Transverse colon (tissue), 4 donors: ENCODE measurements at regions of chr3 and their contacts with region 1.

Region 1: GRCh38 chr3:190197346-190197763 is 76.7 kb upstream of the P3H2 start:
- DNase-seq: no peak
- H3K4me3 ChIP-seq: no peak overlapping the region
- H3K27ac ChIP-seq: no peak overlapping the region
- H3K4me1 ChIP-seq: peaks cover 0 to 10% (median 0%) of the 10 kb centered on the region in 4 donors
- H3K27me3 ChIP-seq: no peaks in the 10 kb centered on the region
- CTCF ChIP-seq: no peak
- EP300 ChIP-seq: no peak
- POLR2A ChIP-seq: no peak

Region 2: DNA sequence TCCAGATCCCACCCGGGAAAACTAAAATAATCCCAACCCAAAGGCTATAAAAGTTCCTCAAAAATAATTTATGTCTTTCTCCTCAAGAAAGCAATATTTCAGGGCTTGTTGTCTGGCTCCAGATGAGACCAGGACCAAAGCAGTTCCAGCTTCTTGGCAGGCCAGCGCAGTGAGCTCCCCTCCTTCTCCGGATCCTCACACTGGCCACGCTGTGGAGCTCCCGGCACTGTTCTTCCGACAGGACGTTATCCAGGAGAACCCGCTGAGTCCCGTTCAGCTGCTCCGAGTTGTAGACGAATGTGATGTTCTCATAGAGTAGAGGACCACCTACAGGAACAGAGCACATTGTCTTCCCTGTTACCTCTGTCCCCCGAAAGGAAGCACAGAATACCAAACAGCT is 223.0 kb before region 1 on chr3:
- in situ Hi-C with region 1: loop called (anchors 5 to 10 kb)
- intact Hi-C with region 1: no loop called
- DNase-seq: no peak
- H3K4me3 ChIP-seq: no peak overlapping the region
- H3K27ac ChIP-seq: no peak overlapping the region
- H3K4me1 ChIP-seq: no peaks in the 10 kb centered on the region
- H3K27me3 ChIP-seq: no peaks in the 10 kb centered on the region
- CTCF ChIP-seq: no peak
- EP300 ChIP-seq: no peak
- POLR2A ChIP-seq: no peak